ENCODE measurements at regions of chr5 and their contacts with region 1.

Region 1: DNA sequence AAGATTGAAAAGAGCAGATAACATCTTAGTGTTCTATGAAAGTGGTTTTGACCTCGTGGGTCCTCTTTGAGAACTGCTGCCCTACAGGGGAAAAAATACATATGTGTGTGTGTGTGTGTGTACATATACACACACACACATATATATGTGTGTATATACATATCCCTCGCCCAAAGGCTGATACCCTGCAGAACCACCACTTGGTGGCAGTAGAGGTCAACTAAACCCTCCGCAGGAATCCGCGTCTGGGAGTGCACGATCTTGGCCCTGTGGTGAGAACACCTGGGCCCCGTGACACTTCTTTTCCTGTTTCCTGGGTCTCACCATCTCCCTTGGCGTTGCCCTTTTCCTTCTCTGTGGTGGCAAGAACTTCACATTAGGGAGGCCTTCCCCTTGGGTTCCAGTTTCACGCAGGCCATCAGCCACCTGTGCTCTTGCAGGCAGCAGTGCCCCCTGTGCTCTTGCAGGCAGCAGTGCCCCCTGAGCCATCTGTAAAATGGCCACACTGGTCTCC is 8.2 kb downstream of the IL9 start:
- DNase-seq: peak; percentile 24 to 49 (median 47)
- H3K4me3 ChIP-seq: no peak overlapping the region
- H3K4me3 Mint-ChIP-seq: peak overlapping the region in 1 of 2 donors; percentile 69
- H3K27ac ChIP-seq: no peak overlapping the region
- H3K27ac Mint-ChIP-seq: no peak overlapping the region
- H3K4me1 ChIP-seq: no peaks in the 10 kb centered on the region
- H3K4me1 Mint-ChIP-seq: peaks cover 3% of the 10 kb centered on the region
- H3K27me3 ChIP-seq: peaks cover 0 to 12% of the 10 kb centered on the region in 2 donors
- H3K27me3 Mint-ChIP-seq: peaks cover 8 to 22% (median 17%) of the 10 kb centered on the region in 3 donors
- CTCF ChIP-seq: peak; percentile 95

Region 2: DNA sequence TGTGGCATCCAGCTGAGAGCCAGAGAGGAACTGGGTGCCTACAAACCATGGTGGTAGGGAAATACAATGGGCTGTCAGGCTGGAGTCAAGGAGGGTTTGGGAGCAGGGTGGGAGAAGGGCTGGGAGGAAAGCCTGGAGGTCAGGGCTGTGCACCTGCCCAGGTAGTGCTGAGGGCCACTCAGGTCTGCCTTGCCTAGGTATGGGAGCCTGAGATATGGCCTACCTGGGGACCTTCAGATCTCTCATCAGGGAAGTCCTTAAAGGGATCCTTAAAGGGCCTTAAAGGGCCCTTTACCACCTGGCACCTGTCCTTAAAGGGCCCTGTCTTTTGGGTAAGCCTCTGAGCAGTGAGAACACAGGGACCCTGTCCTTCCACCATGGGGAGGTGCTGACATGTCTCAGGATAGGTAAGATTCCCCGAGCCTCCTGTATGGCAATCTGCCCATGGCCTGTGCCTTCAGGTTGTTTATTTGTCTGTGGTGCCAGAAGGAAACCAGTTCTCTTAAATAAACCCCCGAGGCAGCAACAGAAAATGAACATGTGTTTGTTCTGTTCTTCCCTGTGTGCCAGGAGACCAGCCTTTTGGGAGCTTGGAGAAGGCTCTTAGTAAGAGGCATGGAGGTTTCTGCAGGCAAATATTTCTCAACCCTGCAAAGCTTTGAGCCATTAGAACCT is 29.6 kb before region 1 on chr5:
- intact Hi-C with region 1: no loop called
- DNase-seq: no peak
- H3K4me3 ChIP-seq: no peak overlapping the region
- H3K4me3 Mint-ChIP-seq: no peak overlapping the region
- H3K27ac ChIP-seq: no peak overlapping the region
- H3K27ac Mint-ChIP-seq: no peak overlapping the region
- H3K4me1 ChIP-seq: no peaks in the 10 kb centered on the region
- H3K4me1 Mint-ChIP-seq: peaks cover 6% of the 10 kb centered on the region
- H3K27me3 ChIP-seq: no peaks in the 10 kb centered on the region
- H3K27me3 Mint-ChIP-seq: peaks cover 5 to 11% (median 10%) of the 10 kb centered on the region in 3 donors
- CTCF ChIP-seq: no peak

Region 3: DNA sequence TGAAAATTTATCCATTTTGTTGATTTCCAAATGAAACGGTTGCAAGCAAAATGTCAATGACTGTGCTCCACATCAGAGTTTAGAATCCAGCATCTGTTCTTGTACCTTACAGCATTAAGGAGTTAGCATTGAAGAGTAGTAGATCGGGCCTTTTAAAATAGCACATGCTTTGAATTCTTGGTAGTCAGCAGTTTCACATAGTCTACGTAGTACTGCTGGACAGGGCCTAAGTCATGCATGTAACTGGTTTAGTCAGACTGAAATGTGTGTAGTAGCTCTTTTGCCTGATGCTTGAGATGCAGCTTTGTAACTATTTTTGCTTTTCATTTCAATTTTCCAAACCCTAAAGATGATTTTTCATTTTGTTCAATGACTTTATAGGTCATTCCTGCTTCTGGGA is 47.5 kb after region 1 on chr5:
- intact Hi-C with region 1: no loop called
- DNase-seq: no peak
- H3K4me3 ChIP-seq: no peak overlapping the region
- H3K4me3 Mint-ChIP-seq: no peak overlapping the region
- H3K27ac ChIP-seq: no peak overlapping the region
- H3K27ac Mint-ChIP-seq: no peak overlapping the region
- H3K4me1 ChIP-seq: no peaks in the 10 kb centered on the region
- H3K4me1 Mint-ChIP-seq: no peaks in the 10 kb centered on the region
- H3K27me3 ChIP-seq: peaks cover 62 to 67% of the 10 kb centered on the region in 2 donors
- H3K27me3 Mint-ChIP-seq: peaks cover 36 to 52% (median 43%) of the 10 kb centered on the region in 3 donors
- CTCF ChIP-seq: no peak

Region 4: GRCh38 chr5:136080483-136081216 is 193.2 kb after region 1 on chr5:
- intact Hi-C with region 1: loop called (anchors 5 kb)
- DNase-seq: peak; percentile 71 to 74 (median 71)
- H3K4me3 ChIP-seq: peak overlapping the region in 2 of 3 experiments; percentile 8 to 51
- H3K4me3 Mint-ChIP-seq: peak overlapping the region; percentile 65 to 93
- H3K27ac ChIP-seq: no peak overlapping the region
- H3K27ac Mint-ChIP-seq: peak overlapping the region in 5 of 7 donors; percentile 6 to 74 (median 28)
- H3K4me1 ChIP-seq: peaks cover 13 to 17% of the 10 kb centered on the region in 2 donors
- H3K4me1 Mint-ChIP-seq: peaks cover 11% of the 10 kb centered on the region
- H3K27me3 ChIP-seq: peaks cover 30 to 60% of the 10 kb centered on the region in 2 donors
- H3K27me3 Mint-ChIP-seq: peaks cover 40 to 56% (median 40%) of the 10 kb centered on the region in 3 donors
- CTCF ChIP-seq: no peak

Region 5: DNA sequence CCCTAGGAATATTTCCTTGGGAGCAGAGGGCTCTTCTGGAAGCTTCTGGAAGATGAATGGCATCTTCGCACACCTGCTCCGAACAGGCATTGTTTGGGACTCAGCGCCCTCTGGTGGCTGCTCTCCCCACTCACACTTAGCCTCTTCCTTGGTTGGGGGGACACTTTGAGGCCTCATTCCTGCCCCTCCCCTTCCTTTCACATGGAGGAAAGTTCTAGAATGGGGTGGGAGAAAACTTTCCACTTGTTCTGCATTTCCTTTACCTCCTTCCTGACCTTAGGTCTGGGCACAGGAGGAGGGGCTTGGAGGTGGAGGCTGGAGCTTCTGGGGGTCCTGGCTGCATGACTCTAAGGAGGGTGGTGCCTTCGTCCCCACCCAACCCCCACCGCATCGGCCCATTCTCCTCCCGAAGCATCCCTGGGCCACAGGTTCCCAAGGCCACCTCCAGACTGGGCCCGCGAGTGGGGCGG is 324.9 kb after region 1 on chr5:
- intact Hi-C with region 1: loop called (anchors 1 to 2 kb)
- DNase-seq: peak; percentile 18 to 37 (median 32)
- H3K4me3 ChIP-seq: no peak overlapping the region
- H3K4me3 Mint-ChIP-seq: no peak overlapping the region
- H3K27ac ChIP-seq: no peak overlapping the region
- H3K27ac Mint-ChIP-seq: peak overlapping the region in 1 of 7 donors; percentile 18
- H3K4me1 ChIP-seq: no peaks in the 10 kb centered on the region
- H3K4me1 Mint-ChIP-seq: peaks cover 3% of the 10 kb centered on the region
- H3K27me3 ChIP-seq: no peaks in the 10 kb centered on the region
- H3K27me3 Mint-ChIP-seq: peaks cover 14 to 16% (median 15%) of the 10 kb centered on the region in 3 donors
- CTCF ChIP-seq: peak; percentile 96